A549 (cell line): ENCODE measurements at regions of chr14 and their contacts with region 1.

Region 1: GRCh38 chr14:22472935-22473854 is 115.8 kb downstream of the DAD1 start:
- DNase-seq: peak; percentile 21 to 56
- ATAC-seq: peak; percentile 58 to 82; a peak in 3 of 6 replicates
- H3K4me3 ChIP-seq: no peak overlapping the region
- H3K27ac ChIP-seq: no peak overlapping the region
- H3K4me1 ChIP-seq: no peaks in the 10 kb centered on the region
- CTCF ChIP-seq: peak; percentile 71
- EP300 ChIP-seq: no peak
- POLR2A ChIP-seq: no peak
- RAD21 ChIP-seq: peak; percentile 84 to 87

Region 2: DNA sequence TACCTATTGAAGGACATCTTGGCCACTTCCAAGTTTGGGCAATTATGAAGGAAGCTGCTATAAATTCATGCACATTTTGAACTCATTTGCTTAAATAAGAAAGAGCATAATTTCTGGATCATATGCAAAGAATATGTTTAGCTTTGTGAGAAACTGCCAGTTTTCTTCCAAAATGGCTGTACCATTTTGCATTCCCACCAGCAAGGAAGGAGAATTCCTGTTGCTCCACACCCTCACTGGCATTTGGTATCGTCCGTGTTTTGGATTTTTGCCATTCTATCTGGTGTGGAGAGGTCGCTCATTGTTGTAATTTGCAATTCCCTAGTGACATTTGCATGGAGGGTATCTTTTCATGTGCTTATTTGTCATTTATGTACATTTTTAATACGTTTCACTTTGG is 223.4 kb before region 1 on chr14:
- CTCF ChIA-PET with region 1: no interaction called
- POLR2A ChIA-PET with region 1: no interaction called
- DNase-seq: no peak
- ATAC-seq: no peak
- H3K4me3 ChIP-seq: no peak overlapping the region
- H3K27ac ChIP-seq: no peak overlapping the region
- H3K4me1 ChIP-seq: no peaks in the 10 kb centered on the region
- CTCF ChIP-seq: no peak
- EP300 ChIP-seq: no peak
- POLR2A ChIP-seq: no peak
- RAD21 ChIP-seq: no peak

Region 3: DNA sequence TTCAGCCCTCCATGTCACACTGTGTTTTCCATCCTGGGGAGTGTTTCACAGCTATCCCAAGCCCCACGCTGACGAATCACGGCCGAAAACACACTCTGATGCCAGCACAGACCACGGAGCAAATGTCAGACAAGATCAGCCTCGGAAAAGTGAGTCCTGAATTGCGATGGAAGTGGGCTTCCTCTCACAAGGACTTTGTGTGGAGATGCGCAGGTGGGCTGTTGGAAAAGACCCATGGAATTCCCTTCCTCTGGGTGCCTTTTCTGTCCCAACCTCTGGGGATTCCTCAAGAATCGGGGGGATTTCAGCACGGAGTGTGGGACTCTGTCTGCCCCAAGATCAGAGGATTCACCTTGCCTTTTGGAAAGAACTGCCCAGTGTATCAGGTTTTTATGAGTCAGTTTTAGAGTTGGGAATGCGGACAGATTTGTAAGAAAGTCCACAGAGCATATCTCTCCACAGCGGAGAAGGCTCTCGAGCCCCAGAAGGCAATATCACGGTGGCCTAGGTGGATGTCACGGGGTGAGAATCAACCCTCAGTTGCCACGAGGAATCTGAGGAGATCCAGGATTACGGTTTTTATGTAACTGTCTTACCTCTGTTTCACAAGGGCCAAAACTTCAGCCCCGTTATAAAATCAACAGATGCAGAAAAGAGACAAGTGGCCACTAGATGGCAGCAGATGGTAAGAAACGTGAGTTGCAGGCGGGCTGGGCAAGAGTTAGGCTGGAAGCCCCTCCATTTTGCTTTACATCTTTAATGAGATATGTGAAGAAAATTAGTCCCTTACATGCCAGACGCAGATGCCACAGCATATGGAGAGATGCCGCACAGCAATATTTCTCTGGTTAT is 86.0 kb before region 1 on chr14:
- CTCF ChIA-PET with region 1: interaction called, 123 read pairs
- POLR2A ChIA-PET with region 1: no interaction called
- DNase-seq: peak; percentile 72 to 82
- ATAC-seq: peak; percentile 55 to 78; a peak in 4 of 6 replicates
- H3K4me3 ChIP-seq: no peak overlapping the region
- H3K27ac ChIP-seq: no peak overlapping the region
- H3K4me1 ChIP-seq: peaks cover 32% of the 10 kb centered on the region
- CTCF ChIP-seq: peak; percentile 90
- EP300 ChIP-seq: no peak
- POLR2A ChIP-seq: no peak
- RAD21 ChIP-seq: peak; percentile 92 to 93

Region 4: DNA sequence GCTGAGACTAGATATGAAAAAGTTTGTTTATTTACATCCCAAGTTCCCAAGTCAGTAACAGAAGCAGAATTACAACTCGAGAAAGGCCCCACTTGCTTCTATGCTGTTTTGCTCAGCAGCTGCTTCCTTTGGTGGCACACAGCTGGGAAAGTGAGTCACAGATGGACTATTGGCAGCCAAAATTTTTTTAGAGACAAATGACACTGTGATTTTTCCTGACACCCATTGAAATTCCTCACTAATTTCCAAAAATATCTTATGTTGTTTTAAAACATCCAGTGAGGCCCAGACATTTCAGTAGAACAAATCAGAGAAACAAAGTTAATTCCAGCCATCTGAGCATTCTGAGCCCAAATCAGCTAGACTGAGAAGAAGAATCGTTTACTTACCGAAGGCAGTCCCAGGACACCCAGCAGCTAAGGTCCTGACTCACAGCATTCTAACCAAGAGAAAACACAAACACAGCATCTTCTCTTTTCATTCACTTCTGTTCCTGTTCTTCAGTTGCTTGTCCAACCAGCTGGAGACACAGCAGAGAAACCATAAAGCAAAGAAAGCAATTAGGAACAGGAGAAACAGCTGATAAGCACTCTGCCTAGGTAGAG is 72.4 kb before region 1 on chr14:
- CTCF ChIA-PET with region 1: interaction called, 10 read pairs
- POLR2A ChIA-PET with region 1: no interaction called
- DNase-seq: no peak
- ATAC-seq: no peak
- H3K4me3 ChIP-seq: no peak overlapping the region
- H3K27ac ChIP-seq: no peak overlapping the region
- H3K4me1 ChIP-seq: no peaks in the 10 kb centered on the region
- CTCF ChIP-seq: no peak
- EP300 ChIP-seq: no peak
- POLR2A ChIP-seq: no peak
- RAD21 ChIP-seq: no peak

Region 5: DNA sequence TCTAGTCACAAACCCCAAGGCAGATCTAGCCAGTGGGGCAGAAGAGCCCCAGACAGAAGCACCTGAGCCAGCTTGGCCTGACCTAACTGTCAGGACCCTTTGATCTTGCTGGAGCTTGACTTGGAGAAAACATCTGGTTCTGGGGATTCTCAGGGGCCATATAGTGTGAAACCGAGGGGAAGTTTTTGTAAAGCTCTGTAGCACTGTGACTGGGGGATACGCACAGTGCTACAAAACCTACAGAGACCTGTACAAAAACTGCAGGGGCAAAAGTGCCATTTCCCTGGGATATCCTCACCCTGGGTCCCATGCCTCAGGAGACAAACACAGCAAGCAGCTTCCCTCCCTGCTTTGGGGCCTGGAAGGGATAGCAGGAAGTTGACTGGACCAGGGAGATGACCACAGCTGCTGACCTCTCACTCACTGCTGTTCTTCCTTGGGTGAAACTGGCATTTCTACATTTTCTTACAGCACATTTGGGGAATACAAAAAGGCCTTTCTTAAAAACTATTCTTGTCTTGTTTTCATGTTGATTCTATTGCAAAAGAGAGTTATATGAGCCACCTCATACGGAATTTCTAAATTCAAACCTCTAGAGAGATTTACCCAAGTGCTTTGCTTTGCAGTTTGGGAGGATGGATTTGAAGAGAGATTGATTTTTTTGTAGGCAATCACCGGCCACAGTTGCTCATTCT is 24.1 kb before region 1 on chr14:
- CTCF ChIA-PET with region 1: interaction called, 16 read pairs
- POLR2A ChIA-PET with region 1: no interaction called
- DNase-seq: no peak
- ATAC-seq: no peak
- H3K4me3 ChIP-seq: no peak overlapping the region
- H3K27ac ChIP-seq: no peak overlapping the region
- H3K4me1 ChIP-seq: no peaks in the 10 kb centered on the region
- CTCF ChIP-seq: no peak
- EP300 ChIP-seq: no peak
- POLR2A ChIP-seq: no peak
- RAD21 ChIP-seq: no peak

Region 6: DNA sequence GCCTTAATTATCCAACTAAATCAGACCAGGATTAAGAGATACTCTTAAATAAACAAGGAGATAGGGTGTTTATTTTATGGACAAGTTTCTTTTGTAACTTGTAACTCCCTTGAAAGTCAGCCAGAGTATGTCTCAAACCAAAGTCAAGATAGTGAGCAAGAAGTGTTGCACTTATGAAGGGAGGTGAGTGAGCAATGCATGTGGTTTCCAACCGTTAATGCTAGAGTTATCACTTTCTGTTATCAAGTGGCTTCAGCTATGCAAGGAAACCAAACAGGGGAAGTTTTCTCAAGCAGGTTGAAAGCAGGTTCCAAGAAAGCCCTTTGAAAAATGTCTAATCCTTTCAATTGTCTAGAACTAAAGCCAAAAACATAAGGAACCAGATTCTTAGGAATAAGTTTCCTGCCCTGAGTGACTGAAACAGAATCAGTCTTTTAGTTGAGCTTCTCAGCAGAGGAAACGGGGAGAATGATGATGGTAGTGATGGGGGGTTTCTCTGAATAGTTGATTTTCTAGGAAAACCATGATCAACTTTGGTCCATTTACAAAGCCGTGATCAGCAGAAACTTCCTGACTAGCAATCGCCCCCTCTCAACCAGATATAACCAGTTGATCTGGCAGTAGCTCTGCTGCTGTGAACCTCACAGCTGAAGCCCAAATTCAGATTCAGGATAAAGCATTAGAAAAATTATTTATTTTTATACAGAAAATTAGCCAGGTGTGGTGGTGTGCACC is 12.6 kb before region 1 on chr14:
- CTCF ChIA-PET with region 1: interaction called, 13 read pairs
- POLR2A ChIA-PET with region 1: no interaction called
- DNase-seq: no peak
- ATAC-seq: no peak
- H3K4me3 ChIP-seq: no peak overlapping the region
- H3K27ac ChIP-seq: no peak overlapping the region
- H3K4me1 ChIP-seq: no peaks in the 10 kb centered on the region
- CTCF ChIP-seq: no peak
- EP300 ChIP-seq: no peak
- POLR2A ChIP-seq: no peak
- RAD21 ChIP-seq: no peak

Region 7: DNA sequence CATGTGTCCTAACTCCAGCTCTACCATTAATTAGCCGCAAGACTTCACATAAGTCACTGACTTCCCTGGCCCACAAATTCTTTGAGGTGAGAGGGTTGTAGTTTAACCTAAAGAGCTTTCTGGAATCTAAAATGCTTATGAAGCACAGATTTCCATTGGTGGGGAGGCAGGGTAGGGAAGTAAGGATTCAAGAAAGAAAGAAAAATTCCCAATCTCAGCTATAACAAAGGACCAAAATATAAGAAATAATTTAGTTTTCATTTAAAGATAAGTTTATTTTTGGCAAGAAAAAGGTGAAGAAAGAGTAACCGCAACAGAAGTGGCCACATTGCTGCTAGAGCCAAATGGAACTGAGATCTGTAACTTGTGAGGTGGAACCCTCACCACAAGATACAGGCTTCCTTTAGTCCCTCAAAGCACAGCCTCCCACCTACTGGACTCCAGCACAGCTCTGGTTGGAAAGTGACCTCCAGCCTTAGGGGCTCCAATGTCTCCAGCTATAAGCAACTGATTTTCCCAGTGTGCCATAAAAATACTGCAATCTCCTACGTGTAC is 92.3 kb after region 1 on chr14:
- CTCF ChIA-PET with region 1: no interaction called
- POLR2A ChIA-PET with region 1: no interaction called
- DNase-seq: no peak
- ATAC-seq: no peak
- H3K4me3 ChIP-seq: no peak overlapping the region
- H3K27ac ChIP-seq: no peak overlapping the region
- H3K4me1 ChIP-seq: peaks cover 6% of the 10 kb centered on the region; the same call in 2 of the 3 replicates
- CTCF ChIP-seq: no peak
- EP300 ChIP-seq: no peak
- POLR2A ChIP-seq: no peak
- RAD21 ChIP-seq: no peak